HepG2 (cell line): ENCODE measurements at regions of chr4 and their contacts with region 1.

Region 1: DNA sequence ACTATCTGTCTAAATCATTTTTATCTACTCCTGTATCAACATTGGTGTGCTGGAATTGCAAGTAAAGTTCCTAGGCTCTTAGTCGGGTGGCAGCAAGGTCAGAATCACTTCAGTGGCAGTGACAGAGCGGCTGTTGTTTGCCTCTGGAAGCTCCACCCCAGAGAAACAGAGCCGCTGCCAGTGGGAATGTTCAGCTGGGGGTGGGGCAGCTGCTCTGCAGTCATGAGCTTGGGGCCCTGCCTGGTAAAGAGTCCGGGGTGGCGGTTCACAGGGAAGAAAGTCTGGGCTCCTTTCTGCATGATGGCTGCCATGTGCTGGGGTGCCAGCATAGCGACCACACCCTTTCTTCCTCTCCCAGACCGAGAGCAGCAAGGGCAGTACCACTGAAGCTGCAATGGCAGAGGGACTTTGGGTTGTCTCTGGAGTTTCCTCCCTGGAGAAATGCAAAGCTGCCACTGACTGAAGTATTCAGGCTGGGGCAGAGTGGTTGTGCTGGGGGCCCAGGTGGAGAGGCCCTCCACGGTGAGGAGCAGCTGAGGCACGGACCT is 108.8 kb upstream of the CENPE start:
- DNase-seq: peak; percentile 82
- ATAC-seq: peak; percentile 99
- H3K4me3 ChIP-seq: peak overlapping the region; percentile 54 to 69 (median 55); a peak in 5 of 6 replicates
- H3K27ac ChIP-seq: peak overlapping the region; percentile 49
- H3K4me1 ChIP-seq: peaks cover 34% of the 10 kb centered on the region
- H3K27me3 ChIP-seq: no peaks in the 10 kb centered on the region
- CTCF ChIP-seq: no peak
- EP300 ChIP-seq: no peak
- POLR2A ChIP-seq: 0 out of 4 replicates have a peak, but pooled peaks have one; percentile 15 to 30
- RAD21 ChIP-seq: no peak

Region 2: DNA sequence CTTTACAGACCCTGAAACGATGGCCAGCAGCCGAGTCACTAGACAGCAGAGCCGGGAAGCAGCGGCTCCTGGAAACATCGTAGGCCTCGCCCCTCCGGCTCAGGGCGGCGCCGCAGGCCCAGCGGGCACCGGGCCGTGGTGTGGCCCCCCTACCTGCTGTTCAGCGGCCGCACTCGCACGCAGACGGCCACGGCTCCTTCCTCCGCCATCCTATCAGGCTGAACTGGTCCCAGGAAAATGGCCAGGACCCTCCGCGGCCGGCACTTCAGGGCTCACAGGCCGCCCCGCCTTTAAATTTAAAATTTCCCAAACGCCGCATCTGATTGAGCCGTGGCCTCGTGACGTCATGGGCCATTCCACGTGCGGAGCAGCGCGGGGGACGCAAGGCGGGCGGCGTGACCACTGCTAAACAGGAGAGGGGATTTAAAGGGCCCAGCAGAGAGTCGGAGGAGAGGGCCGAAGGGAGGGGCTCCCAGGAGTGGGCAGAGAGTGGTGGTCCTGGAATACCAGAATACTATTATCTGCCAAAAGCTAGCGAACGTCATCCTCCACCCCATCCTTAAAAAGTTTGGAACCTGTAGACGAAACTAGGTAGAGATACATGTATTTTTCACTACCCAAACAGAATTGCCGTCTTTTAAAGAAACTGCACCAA is 108.7 kb before region 1 on chr4 and contains the start of gene CENPE:
- CTCF ChIA-PET with region 1: no interaction called
- POLR2A ChIA-PET with region 1: no interaction called
- in situ Hi-C with region 1: no loop called
- intact Hi-C with region 1: loop called (anchors 2 kb)
- DNase-seq: peak; percentile 81
- ATAC-seq: peak; percentile 88
- H3K4me3 ChIP-seq: peak within 1 kb of the TSS; percentile 87 to 91 (median 89)
- H3K27ac ChIP-seq: peak within 1 kb of the TSS; percentile 53
- H3K4me1 ChIP-seq: peaks cover 41% of the 10 kb centered on the region
- H3K27me3 ChIP-seq: no peaks in the 10 kb centered on the region; a peak in 1 of 5 replicates
- CTCF ChIP-seq: 0 out of 2 replicates have a peak, but pooled peaks have one; percentile 11
- EP300 ChIP-seq: no peak
- POLR2A ChIP-seq: peak; percentile 47 to 80
- RAD21 ChIP-seq: no peak
- total RNA-seq, gene CENPE: 19.8 and 38.0 TPM in 2 replicates